Heart left ventricle (tissue), 16 donors: ENCODE measurements at regions of chrX and their contacts with region 1.

Region 1: DNA sequence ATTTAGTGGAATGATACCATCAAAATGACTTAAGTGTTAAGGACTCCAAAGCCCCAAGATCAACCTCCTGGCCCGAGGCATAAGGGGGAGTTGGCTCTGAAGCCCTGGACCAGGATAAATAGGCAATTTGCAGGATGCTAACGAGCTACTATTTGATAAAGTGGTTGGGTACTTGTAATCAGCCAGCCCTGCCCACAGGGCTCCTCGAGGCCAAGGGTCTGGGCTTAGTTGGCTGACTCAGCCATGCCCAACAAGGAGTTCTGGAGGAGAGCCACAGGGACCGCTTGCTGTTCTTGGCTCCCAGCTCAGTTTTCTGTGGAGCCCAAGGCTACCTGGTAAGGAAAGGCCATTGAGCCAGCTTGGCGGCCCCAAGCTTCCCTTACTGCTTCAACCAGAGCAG is 7.8 kb downstream of the HMGB3 start:
- DNase-seq: no peak
- ATAC-seq: no peak
- H3K4me3 ChIP-seq: no peak overlapping the region
- H3K27ac ChIP-seq: no peak overlapping the region
- H3K4me1 ChIP-seq: no peaks in the 10 kb centered on the region
- H3K27me3 ChIP-seq: peaks cover 0 to 6% (median 0%) of the 10 kb centered on the region in 9 donors
- CTCF ChIP-seq: no peak
- POLR2A ChIP-seq: no peak

Region 2: DNA sequence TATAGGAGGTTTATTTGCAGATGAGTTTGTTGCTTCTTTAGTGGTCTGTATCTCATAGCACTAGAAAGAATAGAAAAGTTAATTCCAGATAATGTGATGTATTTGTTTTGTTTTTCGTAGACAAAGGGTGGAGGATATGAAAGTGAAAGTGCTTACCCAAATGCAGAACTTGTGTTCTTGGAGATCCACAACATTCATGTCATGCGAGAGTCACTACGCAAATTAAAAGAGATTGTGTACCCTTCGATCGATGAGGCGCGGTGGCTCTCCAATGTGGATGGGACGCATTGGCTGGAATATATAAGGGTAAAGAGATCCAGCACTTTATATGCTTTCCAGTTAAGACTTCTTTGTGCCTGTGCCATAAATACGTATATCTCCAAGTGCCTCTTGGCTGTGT is 254.4 kb before region 1 on chrX:
- intact Hi-C with region 1: no loop called
- DNase-seq: no peak
- ATAC-seq: no peak
- H3K4me3 ChIP-seq: peak overlapping the region in 2 of 12 donors; percentile 7 to 9
- H3K27ac ChIP-seq: no peak overlapping the region
- H3K4me1 ChIP-seq: no peaks in the 10 kb centered on the region
- H3K27me3 ChIP-seq: peaks cover 0 to 5% (median 0%) of the 10 kb centered on the region in 9 donors
- CTCF ChIP-seq: no peak
- POLR2A ChIP-seq: no peak

Region 3: GRCh38 chrX:150958177-150958576 is 32.7 kb before region 1 on chrX:
- intact Hi-C with region 1: loop called in 1 of 10 experiments (anchors 2 kb)
- DNase-seq: no peak
- ATAC-seq: no peak
- H3K4me3 ChIP-seq: no peak overlapping the region
- H3K27ac ChIP-seq: no peak overlapping the region
- H3K4me1 ChIP-seq: no peaks in the 10 kb centered on the region
- H3K27me3 ChIP-seq: no peaks in the 10 kb centered on the region
- CTCF ChIP-seq: no peak
- POLR2A ChIP-seq: no peak

Region 4: GRCh38 chrX:151323054-151323453 is 332.2 kb after region 1 on chrX:
- intact Hi-C with region 1: no loop called
- DNase-seq: no peak
- ATAC-seq: no peak
- H3K4me3 ChIP-seq: no peak overlapping the region
- H3K27ac ChIP-seq: no peak overlapping the region
- H3K4me1 ChIP-seq: no peaks in the 10 kb centered on the region
- H3K27me3 ChIP-seq: peaks cover 0 to 10% (median 0%) of the 10 kb centered on the region in 9 donors
- CTCF ChIP-seq: no peak
- POLR2A ChIP-seq: no peak